Heart left ventricle (tissue), 16 donors: ENCODE measurements at regions of chr18 and their contacts with region 1.

Region 1: GRCh38 chr18:63936156-63936931 is 12.8 kb upstream of the HMSD start:
- DNase-seq: peak; percentile 76 to 94 (median 85)
- ATAC-seq: peak; percentile 93 to 99 (median 99)
- H3K4me3 ChIP-seq: peak overlapping the region in 11 of 12 donors; percentile 27 to 66 (median 52)
- H3K27ac ChIP-seq: no peak overlapping the region
- H3K4me1 ChIP-seq: peaks cover 0 to 13% (median 3%) of the 10 kb centered on the region in 12 donors
- H3K27me3 ChIP-seq: peaks cover 0 to 51% (median 9%) of the 10 kb centered on the region in 9 donors
- CTCF ChIP-seq: peak; percentile 50 to 77 (median 62)
- POLR2A ChIP-seq: no peak

Region 2: GRCh38 chr18:63683152-63683551 is 253.2 kb before region 1 on chr18:
- intact Hi-C with region 1: no loop called
- DNase-seq: no peak
- ATAC-seq: peak in 2 of 4 donors; percentile 57 to 76
- H3K4me3 ChIP-seq: no peak overlapping the region
- H3K27ac ChIP-seq: no peak overlapping the region
- H3K4me1 ChIP-seq: no peaks in the 10 kb centered on the region
- H3K27me3 ChIP-seq: no peaks in the 10 kb centered on the region
- CTCF ChIP-seq: no peak
- POLR2A ChIP-seq: no peak

Region 3: GRCh38 chr18:63823518-63824219 is 112.7 kb before region 1 on chr18:
- intact Hi-C with region 1: loop called in 6 of 10 experiments (anchors 2 to 10 kb)
- DNase-seq: peak in 2 of 5 donors; percentile 40
- ATAC-seq: no peak
- H3K4me3 ChIP-seq: no peak overlapping the region
- H3K27ac ChIP-seq: no peak overlapping the region
- H3K4me1 ChIP-seq: no peaks in the 10 kb centered on the region
- H3K27me3 ChIP-seq: peaks cover 0 to 4% (median 0%) of the 10 kb centered on the region in 9 donors
- CTCF ChIP-seq: peak in 10 of 12 donors; percentile 18 to 52 (median 42)
- POLR2A ChIP-seq: no peak